A673 (cell line): ENCODE measurements at regions of chr5 and their contacts with region 1.

Region 1: DNA sequence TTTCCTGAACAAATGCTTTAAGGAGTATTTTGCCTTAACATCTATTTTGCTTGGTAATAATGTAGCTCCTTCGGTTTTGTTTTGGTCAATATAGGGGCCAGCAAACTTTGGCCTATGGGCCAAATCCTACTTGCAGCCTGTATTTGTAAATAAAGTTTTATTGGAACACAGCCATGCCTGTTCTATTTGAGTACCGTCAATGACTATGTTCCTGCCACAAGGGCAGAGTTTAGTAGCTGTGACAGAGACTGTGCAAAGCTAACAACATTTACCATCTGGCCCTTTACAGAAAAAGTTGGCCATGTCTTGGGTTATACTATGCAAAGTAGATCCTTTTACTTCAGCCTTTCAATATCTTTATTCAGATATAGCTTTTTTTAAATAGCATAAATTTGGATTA is 113.4 kb downstream of the NR3C1 start:
- DNase-seq: no peak
- H3K4me3 ChIP-seq: no peak overlapping the region
- H3K27ac ChIP-seq: no peak overlapping the region
- H3K4me1 ChIP-seq: peaks cover 5% of the 10 kb centered on the region
- H3K27me3 ChIP-seq: no peaks in the 10 kb centered on the region
- CTCF ChIP-seq: no peak

Region 2: GRCh38 chr5:143279698-143280097 is 10.4 kb before region 1 on chr5:
- CTCF ChIA-PET with region 1: no interaction called
- POLR2A ChIA-PET with region 1: interaction called, 11 read pairs
- intact Hi-C with region 1: no loop called
- DNase-seq: no peak
- H3K4me3 ChIP-seq: no peak overlapping the region
- H3K27ac ChIP-seq: no peak overlapping the region
- H3K4me1 ChIP-seq: no peaks in the 10 kb centered on the region
- H3K27me3 ChIP-seq: no peaks in the 10 kb centered on the region
- CTCF ChIP-seq: no peak